ENCODE measurements at regions of chr14 and their contacts with region 1.

Region 1: DNA sequence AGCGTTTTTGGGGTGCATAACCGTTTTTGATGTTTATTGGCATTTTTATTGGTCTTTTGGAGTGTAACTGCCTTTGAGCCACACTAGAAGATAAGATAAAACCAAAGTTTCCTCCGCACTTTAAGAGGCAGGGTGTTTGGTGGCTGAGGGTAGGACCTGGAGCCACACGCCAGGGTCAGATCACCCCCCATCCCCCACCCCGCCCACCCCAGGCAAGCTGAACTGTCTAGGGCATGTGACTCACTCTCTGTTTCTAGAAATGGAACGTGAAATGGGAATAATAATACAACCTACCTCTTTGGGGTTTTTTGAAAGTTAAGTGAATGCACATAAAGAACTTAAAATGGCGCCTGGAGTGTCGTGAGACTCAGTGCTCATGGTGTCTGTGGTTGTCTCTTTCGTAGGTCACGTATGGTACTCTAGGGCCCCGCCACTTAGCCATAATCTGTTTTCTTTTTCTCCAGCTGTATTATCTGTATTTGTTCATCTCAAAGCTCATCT is 56.0 kb downstream of the PPP2R5C start:
- DNase-seq: peak in 5 of 14 experiments; percentile 41 to 88 (median 81)
- ATAC-seq: peak; percentile 19
- H3K4me3 ChIP-seq: peak overlapping the region; percentile 27
- H3K4me3 Mint-ChIP-seq: peak overlapping the region; percentile 78
- H3K27ac ChIP-seq: peak overlapping the region; percentile 98 to 99
- H3K27ac Mint-ChIP-seq: peak overlapping the region; percentile 98
- H3K4me1 ChIP-seq: peaks cover 92% of the 10 kb centered on the region
- H3K4me1 Mint-ChIP-seq: peaks cover 94% of the 10 kb centered on the region
- H3K27me3 ChIP-seq: no peaks in the 10 kb centered on the region
- H3K27me3 Mint-ChIP-seq: no peaks in the 10 kb centered on the region
- CTCF ChIP-seq: no peak

Region 2: DNA sequence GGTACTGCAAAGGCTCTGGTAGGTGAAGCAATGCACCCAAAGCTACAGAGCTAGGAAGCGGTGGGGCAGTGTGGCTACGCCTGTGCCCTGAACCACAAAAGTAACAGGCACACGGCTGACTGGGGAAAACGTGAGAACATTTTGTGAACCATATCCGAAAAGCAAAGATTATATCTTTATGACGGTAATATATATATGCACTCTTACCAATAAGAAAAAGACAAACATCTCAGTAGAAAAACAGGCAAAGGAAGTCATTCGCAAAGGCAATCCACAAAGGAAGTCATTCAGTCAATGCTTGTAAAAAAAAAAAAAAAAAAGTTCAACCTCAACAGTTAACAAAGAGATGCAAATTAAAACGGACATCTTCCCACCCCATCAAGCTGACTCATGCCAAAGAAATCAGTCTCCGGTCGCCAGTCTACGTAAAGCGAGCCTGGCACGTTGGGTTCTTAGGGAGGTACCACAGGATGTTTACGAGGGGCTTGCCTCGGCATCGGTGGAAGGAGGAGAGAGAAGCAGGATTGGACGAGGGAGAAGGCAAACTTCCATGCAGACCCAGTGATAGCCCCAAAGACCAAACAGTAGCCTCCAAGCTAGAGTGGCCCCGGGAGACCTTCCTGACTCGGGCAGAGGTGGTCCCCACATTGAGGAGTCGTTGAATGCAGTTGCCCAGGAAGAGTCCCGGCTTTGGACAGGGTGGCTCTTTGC is 95.4 kb before region 1 on chr14:
- CTCF ChIA-PET with region 1: interaction called, 5 read pairs
- POLR2A ChIA-PET with region 1: interaction called, 34 read pairs
- intact Hi-C with region 1: loop called in 1 of 2 experiments (anchors 5 kb)
- DNase-seq: peak; percentile 65 to 95 (median 77)
- ATAC-seq: peak; percentile 77
- H3K4me3 ChIP-seq: peak overlapping the region; percentile 31
- H3K4me3 Mint-ChIP-seq: peak overlapping the region; percentile 70
- H3K27ac ChIP-seq: peak overlapping the region; percentile 84 to 87
- H3K27ac Mint-ChIP-seq: peak overlapping the region; percentile 95
- H3K4me1 ChIP-seq: peaks cover 61% of the 10 kb centered on the region
- H3K4me1 Mint-ChIP-seq: peaks cover 61% of the 10 kb centered on the region
- H3K27me3 ChIP-seq: no peaks in the 10 kb centered on the region
- H3K27me3 Mint-ChIP-seq: no peaks in the 10 kb centered on the region
- CTCF ChIP-seq: no peak

Region 3: DNA sequence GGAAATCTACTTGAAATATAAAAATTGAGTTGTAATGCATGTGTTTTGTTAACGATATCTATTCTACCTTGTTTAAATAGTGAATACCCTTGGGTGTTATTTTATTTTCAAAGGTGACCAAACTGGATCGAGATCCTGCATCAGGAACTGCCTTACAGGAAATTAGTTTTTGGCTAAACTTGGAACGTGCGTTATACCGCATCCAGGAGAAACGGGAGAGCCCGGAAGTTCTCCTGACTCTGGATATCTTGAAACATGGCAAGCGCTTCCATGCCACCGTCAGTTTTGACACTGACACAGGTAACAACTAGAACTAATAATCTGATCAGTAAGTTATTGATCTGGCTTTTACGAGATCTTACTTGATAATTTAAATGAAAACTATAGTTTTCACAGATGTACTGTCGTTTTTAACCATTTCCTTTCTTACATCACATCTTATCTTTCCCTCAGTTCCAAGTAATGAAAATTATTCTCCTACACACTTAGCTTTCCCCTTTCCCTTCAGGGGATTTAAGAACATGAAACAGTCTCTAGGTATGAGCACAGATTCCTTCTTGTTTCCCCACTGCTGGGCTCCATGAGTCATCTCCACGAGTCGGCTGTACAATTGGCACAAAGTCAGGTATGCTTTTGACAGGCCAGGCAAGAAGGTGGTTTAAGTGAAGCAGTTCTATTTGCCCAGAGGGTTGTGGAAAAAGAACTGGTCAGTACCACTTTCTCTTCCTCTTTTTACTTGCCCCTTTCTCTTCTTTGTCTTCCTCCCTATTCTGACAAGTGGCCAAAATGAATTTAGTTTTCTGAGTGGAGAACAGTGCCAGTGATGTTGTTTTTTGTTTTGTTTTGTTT is 162.9 kb after region 1 on chr14:
- CTCF ChIA-PET with region 1: no interaction called
- POLR2A ChIA-PET with region 1: no interaction called
- intact Hi-C with region 1: no loop called
- DNase-seq: peak in 1 of 14 experiments; percentile 29
- ATAC-seq: no peak
- H3K4me3 ChIP-seq: no peak overlapping the region
- H3K4me3 Mint-ChIP-seq: no peak overlapping the region
- H3K27ac ChIP-seq: no peak overlapping the region
- H3K27ac Mint-ChIP-seq: no peak overlapping the region
- H3K4me1 ChIP-seq: no peaks in the 10 kb centered on the region
- H3K4me1 Mint-ChIP-seq: peaks cover 5% of the 10 kb centered on the region
- H3K27me3 ChIP-seq: no peaks in the 10 kb centered on the region
- H3K27me3 Mint-ChIP-seq: no peaks in the 10 kb centered on the region
- CTCF ChIP-seq: no peak